Activated CD4-positive, alpha-beta memory T cell treated with anti-CD3 and anti-CD28 coated beads for 36 hours (primary cell): ENCODE measurements at regions of chr16 and their contacts with region 1.

Region 1: DNA sequence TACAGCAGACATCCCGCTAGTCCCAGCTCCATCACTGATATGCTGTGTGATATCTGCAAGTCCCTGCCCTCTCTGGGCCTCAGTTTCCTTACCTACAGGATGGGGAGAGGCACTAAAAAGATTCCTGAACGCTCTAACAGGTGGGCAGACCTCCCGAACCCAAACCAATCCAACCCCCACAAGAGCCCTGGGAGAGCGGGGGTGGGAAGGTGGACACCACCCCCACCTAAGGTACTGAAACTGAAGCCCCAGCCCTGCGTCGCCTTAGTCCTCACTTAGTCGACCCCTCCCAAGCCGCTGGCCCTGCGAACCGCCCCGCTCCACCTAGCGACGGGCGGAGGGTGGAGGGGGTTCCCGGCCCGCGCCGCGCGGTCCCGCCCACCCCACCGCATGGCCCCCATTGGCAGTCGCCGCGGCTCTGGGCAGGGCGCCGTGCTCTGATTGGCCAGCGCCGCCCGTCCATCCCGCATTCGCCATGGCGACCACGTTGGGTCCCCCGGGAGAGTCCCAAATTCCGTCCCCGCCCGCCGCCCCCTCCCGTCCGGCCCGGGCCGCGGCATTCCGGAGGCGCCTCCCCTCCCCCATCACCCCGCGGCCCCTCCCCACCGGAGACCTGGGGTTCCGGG is 578 bp downstream of the CCDC102A start:
- DNase-seq: peak; percentile 97
- H3K4me3 Mint-ChIP-seq: peak overlapping the region; percentile 86
- H3K27ac Mint-ChIP-seq: peak overlapping the region; percentile 94
- H3K4me1 Mint-ChIP-seq: peaks cover 72% of the 10 kb centered on the region
- H3K27me3 Mint-ChIP-seq: no peaks in the 10 kb centered on the region

Region 2: GRCh38 chr16:57462209-57462977 is 73.4 kb before region 1 on chr16 and contains the start of gene POLR2C:
- CTCF ChIA-PET with region 1: interaction called, 4 read pairs
- POLR2A ChIA-PET with region 1: interaction called, 5 read pairs
- intact Hi-C with region 1: loop called (anchors 2 kb)
- DNase-seq: peak; percentile 95
- H3K4me3 Mint-ChIP-seq: peak within 1 kb of the TSS; percentile 100
- H3K27ac Mint-ChIP-seq: peak within 1 kb of the TSS; percentile 98
- H3K4me1 Mint-ChIP-seq: peaks cover 34% of the 10 kb centered on the region
- H3K27me3 Mint-ChIP-seq: no peaks in the 10 kb centered on the region
- total RNA-seq, gene POLR2C: 52.5 to 57.0 TPM

Region 3: DNA sequence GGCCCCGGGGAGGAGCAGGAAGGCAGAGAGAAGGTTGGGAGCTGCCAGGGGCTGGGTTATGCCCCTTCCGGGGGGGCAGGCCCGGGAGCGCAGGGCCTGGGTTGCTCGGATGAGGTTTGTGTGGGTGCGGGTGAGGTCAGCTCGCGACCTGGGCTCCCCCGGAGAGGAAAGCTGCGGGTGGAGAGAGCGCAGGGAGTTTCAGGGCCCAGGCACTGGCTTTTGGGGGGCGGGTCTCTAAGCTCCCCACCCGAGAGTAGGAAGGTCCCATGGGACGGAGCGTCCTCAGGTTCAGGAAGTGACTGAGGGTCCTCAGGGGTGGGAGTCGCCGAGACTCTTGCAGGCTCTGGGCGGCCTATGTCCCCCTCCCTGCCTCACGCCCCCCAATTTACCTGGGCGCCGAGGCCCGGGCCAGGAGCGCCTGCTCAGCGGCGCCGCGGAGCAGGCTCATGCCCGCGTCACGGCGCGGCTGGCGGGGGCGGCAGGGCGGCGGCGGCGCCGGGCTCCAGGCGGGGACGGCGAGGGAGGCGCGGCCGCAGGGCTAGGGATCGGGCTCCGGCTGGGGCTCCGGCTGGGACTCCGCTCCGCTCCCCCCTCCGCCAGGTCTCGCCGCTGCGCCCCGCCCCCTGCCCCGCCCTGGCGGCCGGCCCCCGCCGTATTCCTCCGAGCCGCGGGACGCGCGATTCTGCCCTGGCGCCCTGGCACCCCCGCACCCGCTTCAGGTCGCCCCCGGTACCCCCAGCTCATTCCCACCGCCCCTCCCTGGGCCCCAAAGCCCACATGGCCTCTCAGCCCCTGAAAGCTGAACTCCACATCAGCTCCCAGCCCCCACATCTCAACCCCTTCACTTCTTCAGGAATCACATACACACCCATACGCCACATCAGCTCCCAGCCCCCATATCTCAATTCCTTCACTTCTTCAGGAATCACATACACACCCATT is 49.6 kb before region 1 on chr16 and contains the start of gene DOK4:
- CTCF ChIA-PET with region 1: interaction called, 3 read pairs
- POLR2A ChIA-PET with region 1: interaction called, 5 read pairs
- intact Hi-C with region 1: loop called (anchors 1 kb)
- DNase-seq: peak; percentile 85
- H3K4me3 Mint-ChIP-seq: peak within 1 kb of the TSS; percentile 79
- H3K27ac Mint-ChIP-seq: peak within 1 kb of the TSS; percentile 64
- H3K4me1 Mint-ChIP-seq: peaks cover 11% of the 10 kb centered on the region
- H3K27me3 Mint-ChIP-seq: no peaks in the 10 kb centered on the region
- total RNA-seq, gene DOK4: 5.5 to 7.1 TPM

Region 4: DNA sequence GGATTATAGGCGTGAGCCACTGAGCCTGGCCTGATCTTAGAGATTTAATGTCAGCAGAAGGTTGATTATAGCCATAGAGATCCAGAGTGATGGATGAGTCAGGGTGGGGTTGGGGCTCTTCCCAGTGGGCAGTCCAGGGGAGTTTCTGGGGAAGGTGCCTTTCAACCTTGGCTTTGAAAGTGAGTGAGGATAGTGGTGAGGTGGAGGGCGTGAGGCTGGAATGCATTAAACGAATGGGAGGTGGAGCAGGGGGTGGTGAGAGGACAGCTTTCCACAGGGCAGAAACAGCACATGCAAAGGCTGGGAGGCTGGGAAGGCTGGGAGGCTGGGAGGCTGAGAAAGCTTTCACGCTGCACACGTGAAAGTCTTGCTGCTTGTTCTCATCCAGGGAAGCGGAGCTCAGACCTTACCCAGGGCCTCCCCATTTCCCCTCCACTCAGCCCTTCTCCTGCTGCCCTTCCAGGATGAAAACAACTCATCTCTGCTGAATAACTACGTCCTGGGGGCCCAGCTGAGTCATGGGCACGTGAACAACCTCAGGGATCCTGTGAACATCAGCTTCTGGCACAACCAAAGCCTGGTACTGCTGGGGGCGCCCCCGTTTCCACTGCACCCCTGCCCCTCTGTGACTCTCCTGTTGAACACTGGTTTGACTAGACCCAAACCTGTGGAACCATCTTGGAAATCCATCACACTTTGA is 28.9 kb after region 1 on chr16:
- CTCF ChIA-PET with region 1: no interaction called
- POLR2A ChIA-PET with region 1: no interaction called
- intact Hi-C with region 1: no loop called
- DNase-seq: no peak
- H3K4me3 Mint-ChIP-seq: no peak overlapping the region
- H3K27ac Mint-ChIP-seq: no peak overlapping the region
- H3K4me1 Mint-ChIP-seq: peaks cover 6% of the 10 kb centered on the region
- H3K27me3 Mint-ChIP-seq: no peaks in the 10 kb centered on the region

Region 5: DNA sequence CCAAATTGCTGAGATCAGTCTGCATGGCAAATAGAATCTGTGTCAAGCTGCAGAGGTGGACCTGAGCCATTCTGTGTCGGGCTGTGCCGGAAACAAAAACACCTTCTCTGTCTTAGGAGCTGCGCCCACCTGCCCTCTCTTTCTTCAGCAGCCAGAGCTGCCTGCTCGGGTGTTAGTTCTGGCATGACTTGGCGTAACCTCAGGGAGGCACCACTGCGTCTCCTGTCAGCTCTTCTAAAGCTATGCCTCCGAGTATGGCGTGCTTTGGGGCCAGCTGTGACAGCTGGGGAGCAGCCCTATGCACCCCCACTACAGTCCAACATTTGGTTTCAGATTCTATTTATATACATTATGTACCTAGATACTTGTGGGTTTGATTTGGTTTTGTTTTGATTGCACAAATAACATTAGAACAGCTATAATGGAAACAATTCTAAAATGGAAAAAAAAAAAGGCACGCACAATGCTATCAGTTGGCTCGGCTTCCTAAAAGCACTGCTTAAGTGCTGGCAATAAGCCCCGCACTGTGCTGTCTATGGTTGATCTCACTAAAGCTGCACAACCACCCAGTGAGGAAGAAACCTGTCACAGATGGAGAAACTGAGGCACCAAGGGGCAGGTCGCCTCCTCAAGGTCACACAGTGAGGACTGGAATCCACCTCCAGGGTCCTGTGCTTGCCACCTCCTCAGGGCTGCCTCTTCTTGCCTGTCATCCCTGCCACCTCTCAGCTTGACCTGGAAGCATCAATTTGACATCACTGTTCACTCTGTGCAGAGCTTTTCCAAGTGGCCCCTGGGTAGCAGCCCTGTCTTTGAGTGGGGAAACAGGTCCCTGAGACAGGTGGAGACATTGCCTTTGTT is 74.0 kb after region 1 on chr16:
- CTCF ChIA-PET with region 1: interaction called, 4 read pairs
- POLR2A ChIA-PET with region 1: interaction called, 17 read pairs
- intact Hi-C with region 1: no loop called
- DNase-seq: peak; percentile 92
- H3K4me3 Mint-ChIP-seq: peak overlapping the region; percentile 48
- H3K27ac Mint-ChIP-seq: peak overlapping the region; percentile 94
- H3K4me1 Mint-ChIP-seq: peaks cover 51% of the 10 kb centered on the region
- H3K27me3 Mint-ChIP-seq: no peaks in the 10 kb centered on the region